Psoas muscle (tissue), 8 donors: ENCODE measurements at regions of chr1 and their contacts with region 1.

Region 1: DNA sequence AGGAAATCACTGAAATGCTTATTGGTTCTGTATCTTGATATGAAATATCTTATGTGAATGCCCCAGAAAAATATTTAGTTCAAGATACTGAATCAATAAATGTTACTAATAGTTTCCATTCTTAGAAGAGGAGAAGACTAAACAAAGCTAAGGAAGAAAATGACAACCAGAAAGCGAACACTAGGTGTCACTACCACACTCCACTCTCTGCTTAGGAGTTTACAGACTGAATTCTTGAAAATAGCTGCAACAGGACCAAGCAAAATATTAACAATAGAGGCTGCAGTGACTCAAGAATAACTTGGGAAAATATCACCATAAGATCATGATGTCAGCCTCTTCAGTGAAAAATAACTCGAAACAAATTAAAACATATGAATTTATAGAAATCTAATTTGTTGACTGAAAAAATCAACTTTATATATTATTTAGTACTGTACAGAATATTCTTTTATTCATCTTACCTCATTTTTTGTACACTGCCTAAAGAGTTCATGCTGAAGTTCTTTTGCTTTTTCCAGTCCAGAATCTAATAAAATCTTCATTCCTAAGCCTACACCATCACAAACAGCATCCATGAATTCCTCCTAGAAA is 61.6 kb downstream of the KIF14 start:
- DNase-seq: no peak
- ATAC-seq: no peak
- H3K4me3 ChIP-seq: no peak overlapping the region
- H3K27ac ChIP-seq: no peak overlapping the region
- H3K4me1 ChIP-seq: no peaks in the 10 kb centered on the region
- H3K27me3 ChIP-seq: no peaks in the 10 kb centered on the region
- CTCF ChIP-seq: peak; percentile 54

Region 2: DNA sequence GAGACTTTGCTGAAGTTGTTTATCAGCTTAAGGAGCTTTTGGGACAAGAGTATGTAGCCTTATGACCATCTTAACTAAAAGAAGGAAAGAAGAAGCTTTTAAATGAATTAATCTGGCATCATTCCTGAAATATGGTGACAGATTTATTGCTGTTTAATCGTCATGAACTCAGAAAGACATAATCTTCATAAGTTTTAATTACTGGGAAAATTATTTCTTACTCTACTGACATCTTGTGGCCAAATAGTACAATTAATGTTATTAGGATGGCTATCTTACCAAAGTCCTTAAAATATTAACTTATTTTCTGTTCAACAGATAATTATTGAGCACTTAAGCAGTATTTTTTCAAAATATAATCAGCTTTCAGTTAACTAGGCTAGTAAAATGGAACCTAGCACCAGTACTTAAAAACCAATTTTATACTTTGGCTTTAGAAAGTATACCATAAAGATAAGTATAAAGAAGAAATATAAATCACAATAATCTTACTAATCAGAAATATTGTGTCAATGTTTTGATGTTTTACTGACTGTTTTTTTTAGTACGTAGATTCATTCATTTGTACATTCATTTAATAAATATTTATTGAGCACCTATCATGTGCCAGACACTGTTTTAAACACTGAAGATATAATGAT is 279.1 kb after region 1 on chr1:
- intact Hi-C with region 1: loop called in 1 of 2 experiments (anchors 10 kb)
- DNase-seq: no peak
- ATAC-seq: no peak
- H3K4me3 ChIP-seq: no peak overlapping the region
- H3K27ac ChIP-seq: no peak overlapping the region
- H3K4me1 ChIP-seq: no peaks in the 10 kb centered on the region
- H3K27me3 ChIP-seq: no peaks in the 10 kb centered on the region
- CTCF ChIP-seq: peak; percentile 51

Region 3: DNA sequence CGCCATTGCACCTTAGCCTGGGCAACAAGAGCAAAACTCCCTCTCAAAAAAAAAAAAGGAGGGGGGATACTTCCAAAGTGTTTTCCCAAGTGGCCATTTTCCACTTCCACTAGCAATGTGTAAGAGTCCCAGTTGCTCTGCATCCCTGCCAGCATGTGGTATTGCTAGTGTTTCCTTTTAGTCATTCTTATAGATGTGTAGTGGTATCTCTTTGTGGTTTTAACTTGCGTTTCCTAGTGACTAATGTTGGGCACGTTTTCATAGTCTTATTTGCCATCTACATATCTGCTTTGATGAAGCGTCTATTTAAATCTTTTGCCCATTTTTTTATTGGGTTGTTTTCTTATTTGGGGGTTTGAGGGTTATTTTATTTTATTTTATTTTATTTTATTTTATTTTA is 366.9 kb after region 1 on chr1:
- intact Hi-C with region 1: no loop called
- DNase-seq: no peak
- ATAC-seq: no peak
- H3K4me3 ChIP-seq: no peak overlapping the region
- H3K27ac ChIP-seq: no peak overlapping the region
- H3K4me1 ChIP-seq: no peaks in the 10 kb centered on the region
- H3K27me3 ChIP-seq: no peaks in the 10 kb centered on the region
- CTCF ChIP-seq: no peak